HCT116 (cell line): ENCODE measurements at regions of chr20 and their contacts with region 1.

Region 1: DNA sequence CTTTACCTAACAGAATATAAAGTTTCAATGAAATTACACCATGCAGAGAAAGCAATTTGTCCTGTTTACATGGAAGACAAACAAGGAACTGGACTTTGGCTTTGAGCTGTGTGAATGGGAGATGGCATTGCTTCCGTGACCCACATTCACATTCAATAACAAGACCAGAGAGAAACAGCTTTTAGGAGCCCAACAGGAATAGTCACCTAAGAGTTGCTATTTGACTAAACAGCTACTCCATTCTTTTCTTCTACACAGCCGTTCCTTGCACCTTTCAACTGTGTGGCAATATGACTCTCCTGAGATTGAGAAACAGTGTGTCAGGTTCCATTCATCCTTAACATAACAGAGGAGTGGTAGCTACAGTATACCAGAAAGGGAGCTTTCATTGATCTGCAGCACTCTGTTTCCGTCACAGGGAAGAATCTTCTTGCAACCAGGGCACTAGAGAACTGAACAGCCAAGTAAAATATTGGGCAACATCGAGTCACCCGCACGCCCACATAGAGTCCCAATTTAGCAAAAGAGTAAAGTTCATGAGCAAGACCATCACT is 355.1 kb downstream of the HAO1 start:
- DNase-seq: no peak
- ATAC-seq: no peak
- H3K4me3 ChIP-seq: no peak overlapping the region
- H3K27ac ChIP-seq: no peak overlapping the region
- H3K4me1 ChIP-seq: no peaks in the 10 kb centered on the region
- H3K27me3 ChIP-seq: no peaks in the 10 kb centered on the region
- CTCF ChIP-seq: no peak
- POLR2A ChIP-seq: no peak
- RAD21 ChIP-seq: no peak

Region 2: GRCh38 chr20:7505152-7505834 is 79.9 kb before region 1 on chr20:
- CTCF ChIA-PET with region 1: no interaction called
- POLR2A ChIA-PET with region 1: no interaction called
- RAD21 ChIA-PET with region 1: no interaction called
- intact Hi-C with region 1: no loop called
- DNase-seq: no peak
- ATAC-seq: no peak
- H3K4me3 ChIP-seq: no peak overlapping the region
- H3K27ac ChIP-seq: no peak overlapping the region
- H3K4me1 ChIP-seq: no peaks in the 10 kb centered on the region
- H3K27me3 ChIP-seq: no peaks in the 10 kb centered on the region
- CTCF ChIP-seq: no peak
- POLR2A ChIP-seq: no peak
- RAD21 ChIP-seq: no peak

Region 3: GRCh38 chr20:7571521-7572055 is 13.6 kb before region 1 on chr20:
- CTCF ChIA-PET with region 1: no interaction called
- POLR2A ChIA-PET with region 1: no interaction called
- RAD21 ChIA-PET with region 1: no interaction called
- intact Hi-C with region 1: loop called (anchors 2 kb)
- DNase-seq: no peak
- ATAC-seq: no peak
- H3K4me3 ChIP-seq: no peak overlapping the region
- H3K27ac ChIP-seq: no peak overlapping the region
- H3K4me1 ChIP-seq: no peaks in the 10 kb centered on the region
- H3K27me3 ChIP-seq: no peaks in the 10 kb centered on the region
- CTCF ChIP-seq: no peak
- POLR2A ChIP-seq: no peak
- RAD21 ChIP-seq: no peak